Heart right ventricle (tissue), 16 donors: ENCODE measurements at regions of chr17 and their contacts with region 1.

Region 1: GRCh38 chr17:38982858-38983746 is 15.9 kb upstream of the FBXO47 start:
- DNase-seq: peak in 1 of 2 donors; percentile 70
- ATAC-seq: peak in 7 of 8 donors; percentile 52 to 79 (median 74)
- H3K4me3 ChIP-seq: no peak overlapping the region
- H3K27ac ChIP-seq: peak overlapping the region in 5 of 10 donors; percentile 8 to 71 (median 55)
- H3K4me1 ChIP-seq: peaks cover 0 to 9% (median 3%) of the 10 kb centered on the region in 9 donors
- H3K27me3 ChIP-seq: no peaks in the 10 kb centered on the region
- CTCF ChIP-seq: peak; percentile 66 to 92 (median 84)

Region 2: DNA sequence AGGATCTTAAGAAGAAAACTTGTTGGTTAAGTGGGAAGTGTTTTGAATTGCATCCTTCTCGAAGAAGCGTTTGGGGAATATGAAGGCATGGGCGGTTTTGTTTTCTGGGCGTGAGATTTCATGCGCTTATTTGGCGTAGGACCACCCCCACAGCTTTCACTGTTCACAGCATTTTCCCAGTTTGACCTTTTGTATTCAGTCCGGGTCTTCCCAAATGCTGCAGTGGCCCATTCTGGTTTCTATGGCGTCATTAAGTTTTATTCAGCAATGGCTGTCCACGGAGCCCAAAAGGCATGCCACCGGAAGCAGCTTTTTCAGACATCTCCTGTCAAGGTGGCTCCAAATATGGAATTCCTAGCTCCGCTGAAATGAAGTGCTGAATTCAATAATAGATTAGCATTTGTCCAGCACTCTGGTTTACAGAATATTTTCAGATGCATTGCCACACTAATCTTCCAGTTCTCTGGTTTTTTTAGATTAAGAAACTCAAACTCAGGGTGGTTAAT is 74.7 kb after region 1 on chr17:
- intact Hi-C with region 1: loop called in 5 of 10 experiments (anchors 2 to 10 kb)
- DNase-seq: no peak
- ATAC-seq: no peak
- H3K4me3 ChIP-seq: peak overlapping the region in 8 of 10 donors; percentile 52 to 75 (median 62)
- H3K27ac ChIP-seq: peak overlapping the region in 5 of 10 donors; percentile 33 to 76 (median 71)
- H3K4me1 ChIP-seq: peaks cover 0 to 40% (median 13%) of the 10 kb centered on the region in 9 donors
- H3K27me3 ChIP-seq: no peaks in the 10 kb centered on the region
- CTCF ChIP-seq: no peak

Region 3: DNA sequence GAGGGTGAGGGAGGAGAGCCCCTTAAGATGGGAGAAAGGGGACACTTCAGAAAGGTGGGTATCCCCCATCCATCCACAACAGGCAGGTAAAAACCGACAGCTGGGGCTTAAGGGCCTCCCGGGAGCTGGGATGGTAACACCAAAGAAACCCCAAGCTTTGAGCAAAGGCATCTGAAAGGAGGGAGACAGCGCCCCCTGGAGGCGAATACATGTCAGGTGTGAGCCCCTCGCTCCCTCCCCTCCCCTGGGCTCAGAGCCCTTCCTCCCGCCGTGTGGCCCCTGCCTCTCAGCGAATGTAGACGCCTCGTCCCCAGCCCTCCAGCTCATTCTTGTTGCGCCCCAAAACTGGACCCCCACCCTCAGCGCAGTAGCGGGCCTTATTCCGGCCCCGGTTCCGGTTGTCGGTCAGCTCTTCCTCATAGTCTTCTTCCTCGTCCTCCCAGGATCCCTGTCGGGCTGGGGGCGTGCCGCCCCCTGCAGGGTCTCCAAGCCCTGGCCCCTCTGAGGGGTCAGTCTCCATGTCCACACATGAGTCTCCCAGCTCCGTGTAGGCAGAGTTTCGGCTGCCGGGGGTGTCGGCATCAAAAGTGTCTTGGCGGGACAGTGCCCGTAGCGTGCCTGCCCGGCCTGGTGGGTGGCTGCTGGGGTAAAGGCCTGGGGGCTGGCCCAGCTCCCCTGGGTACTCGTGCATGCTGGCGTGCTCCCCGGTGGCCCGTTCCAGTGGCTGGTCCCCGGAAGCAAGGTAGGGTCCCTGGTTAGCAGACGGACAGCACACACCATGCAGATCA is 192.0 kb after region 1 on chr17:
- intact Hi-C with region 1: loop called in 3 of 10 experiments (anchors 1 to 5 kb)
- DNase-seq: peak; percentile 77 to 83
- ATAC-seq: peak; percentile 74 to 92 (median 84)
- H3K4me3 ChIP-seq: peak overlapping the region in 5 of 10 donors; percentile 5 to 34 (median 15)
- H3K27ac ChIP-seq: no peak overlapping the region
- H3K4me1 ChIP-seq: peaks cover 0 to 13% (median 6%) of the 10 kb centered on the region in 9 donors
- H3K27me3 ChIP-seq: no peaks in the 10 kb centered on the region
- CTCF ChIP-seq: peak; percentile 84 to 93 (median 91)